ENCODE measurements at regions of chr16 and their contacts with region 1.

Region 1: GRCh38 chr16:47141773-47142485 is 1.8 kb downstream of the NETO2 start:
- DNase-seq: peak; percentile 79
- H3K4me3 Mint-ChIP-seq: peak overlapping the region; percentile 90
- H3K27ac Mint-ChIP-seq: peak overlapping the region; percentile 53
- H3K4me1 Mint-ChIP-seq: peaks cover 50% of the 10 kb centered on the region
- H3K27me3 Mint-ChIP-seq: peaks cover 16% of the 10 kb centered on the region

Region 2: DNA sequence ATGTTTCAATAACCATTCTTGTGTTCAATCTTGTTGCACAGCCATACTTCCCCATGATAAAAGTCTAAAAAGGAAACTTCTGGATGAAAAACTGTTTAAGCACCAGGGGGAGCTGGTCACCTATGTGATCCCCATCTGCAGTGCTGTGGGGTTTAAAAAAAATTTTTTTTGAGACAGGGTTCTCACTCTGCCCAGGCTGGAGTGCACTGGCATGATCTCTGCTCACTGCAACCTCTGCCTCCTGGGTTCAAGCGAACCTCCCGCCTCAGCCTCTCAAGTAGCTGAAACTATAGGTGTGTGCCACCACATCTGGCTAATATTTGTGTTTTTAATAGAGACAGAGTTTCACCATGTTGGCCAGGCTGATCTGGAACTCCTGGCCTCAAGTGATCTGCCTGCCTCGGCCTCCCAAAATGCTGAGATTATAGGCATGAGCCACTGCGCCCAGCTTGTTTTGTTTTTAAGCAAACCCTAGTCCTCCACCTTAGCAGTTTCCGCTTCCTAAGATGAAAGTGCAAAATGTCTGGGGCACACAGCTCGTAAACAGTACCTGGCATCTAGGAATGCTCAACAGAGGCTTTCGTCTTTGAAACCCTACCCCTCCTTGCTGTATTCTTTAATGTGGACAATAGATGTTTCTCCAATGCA is 193.9 kb before region 1 on chr16:
- intact Hi-C with region 1: loop called (anchors 10 kb)
- DNase-seq: peak; percentile 19
- H3K4me3 Mint-ChIP-seq: no peak overlapping the region
- H3K27ac Mint-ChIP-seq: no peak overlapping the region
- H3K4me1 Mint-ChIP-seq: peaks cover 9% of the 10 kb centered on the region
- H3K27me3 Mint-ChIP-seq: peaks cover 2% of the 10 kb centered on the region

Region 3: GRCh38 chr16:47110939-47111338 is 31.0 kb before region 1 on chr16:
- intact Hi-C with region 1: loop called (anchors 1 kb)
- DNase-seq: no peak
- H3K4me3 Mint-ChIP-seq: no peak overlapping the region
- H3K27ac Mint-ChIP-seq: no peak overlapping the region
- H3K4me1 Mint-ChIP-seq: peaks cover 20% of the 10 kb centered on the region
- H3K27me3 Mint-ChIP-seq: no peaks in the 10 kb centered on the region

Region 4: DNA sequence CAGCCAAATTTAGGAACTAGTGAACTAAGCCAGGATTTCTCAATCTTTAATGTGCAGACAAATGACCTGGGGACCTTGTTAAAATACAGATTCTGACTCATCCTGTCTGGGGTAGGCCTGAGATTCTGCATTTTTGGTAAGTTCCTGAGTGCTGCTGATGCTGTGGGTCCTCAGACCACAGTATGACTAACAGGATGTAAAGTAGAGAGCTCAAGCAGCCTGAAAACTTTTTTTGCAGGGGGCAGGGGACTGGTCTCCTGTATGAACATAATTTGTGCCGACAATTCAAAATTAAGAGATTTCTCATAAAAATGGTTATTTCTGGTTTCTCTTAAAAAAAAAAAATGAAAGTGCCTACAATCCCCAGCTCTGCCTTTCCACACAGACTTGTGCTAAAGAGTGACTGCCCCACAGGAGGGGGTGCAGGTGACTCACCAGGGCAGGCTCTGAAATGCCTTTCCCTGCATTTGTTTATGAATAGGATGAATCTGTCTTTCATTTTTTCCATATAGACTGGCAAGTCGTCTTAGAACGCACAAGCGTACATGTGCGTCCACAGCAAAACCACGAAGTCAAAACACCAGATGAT is 590.7 kb after region 1 on chr16:
- intact Hi-C with region 1: loop called (anchors 10 kb)
- DNase-seq: no peak
- H3K4me3 Mint-ChIP-seq: peak overlapping the region; percentile 47
- H3K27ac Mint-ChIP-seq: peak overlapping the region; percentile 87
- H3K4me1 Mint-ChIP-seq: peaks cover 21% of the 10 kb centered on the region
- H3K27me3 Mint-ChIP-seq: no peaks in the 10 kb centered on the region

Region 5: DNA sequence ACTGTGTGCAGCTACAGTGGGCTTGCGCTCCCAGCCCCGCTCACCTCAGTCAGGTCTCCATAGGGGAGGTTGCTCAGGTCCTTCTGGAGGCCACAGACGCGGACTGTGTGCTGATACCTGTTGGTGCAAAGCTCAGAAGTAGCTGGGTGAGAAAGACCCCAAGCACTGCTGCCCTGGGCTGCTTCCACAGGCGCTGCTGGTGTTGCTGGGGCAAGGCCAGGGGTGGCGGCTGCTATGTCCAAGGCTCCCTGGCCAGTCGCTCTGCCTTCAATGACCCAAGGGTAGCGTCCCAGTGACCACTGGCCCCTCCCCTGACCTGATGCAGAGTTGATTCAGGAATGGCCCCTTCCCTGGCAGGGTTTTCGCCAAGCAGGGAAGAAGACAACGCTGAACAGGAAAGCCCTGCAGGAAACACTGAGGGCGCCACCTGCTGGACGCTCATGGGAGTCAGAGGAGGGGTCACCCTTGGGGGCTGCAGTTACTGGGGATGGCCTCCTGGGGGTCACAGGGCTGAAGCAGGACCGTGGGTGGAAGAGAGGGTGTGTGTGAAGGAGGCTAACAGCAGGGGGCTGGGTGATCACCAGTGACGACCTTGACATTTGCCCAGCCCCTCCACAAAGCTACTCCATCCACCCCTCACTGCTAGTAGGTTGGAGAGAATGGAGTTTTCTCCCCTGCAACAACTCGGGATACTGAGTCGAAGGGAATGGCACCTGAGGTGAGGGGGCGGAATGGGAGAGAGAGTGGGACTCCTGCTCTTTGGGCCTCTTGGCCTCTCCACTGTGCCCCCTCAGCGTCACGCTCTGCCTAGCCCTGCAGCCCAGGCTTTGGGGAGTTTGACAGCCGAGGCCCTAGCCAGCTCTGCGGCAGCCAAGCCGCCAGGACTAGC is 975.5 kb after region 1 on chr16:
- intact Hi-C with region 1: loop called (anchors 1 kb)
- DNase-seq: peak; percentile 34
- H3K4me3 Mint-ChIP-seq: no peak overlapping the region
- H3K27ac Mint-ChIP-seq: no peak overlapping the region
- H3K4me1 Mint-ChIP-seq: peaks cover 13% of the 10 kb centered on the region
- H3K27me3 Mint-ChIP-seq: no peaks in the 10 kb centered on the region

Region 6: GRCh38 chr16:48231727-48232492 is 1090.0 kb after region 1 on chr16:
- intact Hi-C with region 1: loop called (anchors 5 kb)
- DNase-seq: peak; percentile 28
- H3K4me3 Mint-ChIP-seq: no peak overlapping the region
- H3K27ac Mint-ChIP-seq: peak overlapping the region; percentile 55
- H3K4me1 Mint-ChIP-seq: peaks cover 25% of the 10 kb centered on the region
- H3K27me3 Mint-ChIP-seq: peaks cover 14% of the 10 kb centered on the region